ENCODE measurements at regions of chr15 and their contacts with region 1.

Region 1: GRCh38 chr15:92521624-92522008 is 127.9 kb downstream of the ST8SIA2 start:
- DNase-seq: peak; percentile 80 to 81
- ATAC-seq: peak; percentile 98 to 99
- H3K4me3 ChIP-seq: no peak overlapping the region
- H3K27ac ChIP-seq: no peak overlapping the region
- H3K4me1 ChIP-seq: no peaks in the 10 kb centered on the region
- CTCF ChIP-seq: peak; percentile 70
- EP300 ChIP-seq: no peak
- POLR2A ChIP-seq: no peak
- RAD21 ChIP-seq: peak; percentile 86 to 88

Region 2: GRCh38 chr15:92473756-92474155 is 47.9 kb before region 1 on chr15:
- CTCF ChIA-PET with region 1: no interaction called
- POLR2A ChIA-PET with region 1: no interaction called
- DNase-seq: no peak
- ATAC-seq: no peak
- H3K4me3 ChIP-seq: no peak overlapping the region
- H3K27ac ChIP-seq: no peak overlapping the region
- H3K4me1 ChIP-seq: no peaks in the 10 kb centered on the region
- CTCF ChIP-seq: no peak
- EP300 ChIP-seq: no peak
- POLR2A ChIP-seq: no peak
- RAD21 ChIP-seq: no peak

Region 3: DNA sequence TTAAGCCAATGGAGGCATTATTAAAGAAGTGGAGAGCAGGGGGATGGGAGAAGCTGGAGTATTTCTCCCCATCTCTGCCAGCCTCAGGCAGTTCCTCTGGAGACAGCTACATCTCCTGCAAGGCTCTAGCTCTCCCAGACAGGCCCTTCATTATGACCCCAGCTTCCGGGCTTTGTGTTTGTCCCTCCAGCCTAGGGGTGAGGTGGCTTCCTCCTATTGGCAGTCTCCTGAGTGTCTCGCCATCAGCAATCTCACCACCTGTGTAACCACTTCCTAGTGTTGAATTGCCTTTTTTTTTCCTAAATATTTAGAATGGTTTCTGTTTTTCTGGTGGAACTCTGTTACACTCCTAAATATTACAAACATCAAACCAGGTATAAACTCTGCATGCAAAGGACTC is 11.7 kb after region 1 on chr15:
- CTCF ChIA-PET with region 1: interaction called, 18 read pairs
- POLR2A ChIA-PET with region 1: no interaction called
- DNase-seq: no peak
- ATAC-seq: no peak
- H3K4me3 ChIP-seq: no peak overlapping the region
- H3K27ac ChIP-seq: no peak overlapping the region
- H3K4me1 ChIP-seq: no peaks in the 10 kb centered on the region
- CTCF ChIP-seq: no peak
- EP300 ChIP-seq: no peak
- POLR2A ChIP-seq: no peak
- RAD21 ChIP-seq: no peak

Region 4: GRCh38 chr15:92683232-92683834 is 161.7 kb after region 1 on chr15:
- CTCF ChIA-PET with region 1: interaction called, 16 read pairs
- POLR2A ChIA-PET with region 1: no interaction called
- DNase-seq: peak in 1 of 2 experiments; percentile 68
- ATAC-seq: peak; percentile 70 to 90; a peak in 5 of 6 replicates
- H3K4me3 ChIP-seq: no peak overlapping the region
- H3K27ac ChIP-seq: no peak overlapping the region
- H3K4me1 ChIP-seq: peaks cover 9% of the 10 kb centered on the region; the same call in 2 of the 3 replicates
- CTCF ChIP-seq: peak; percentile 56
- EP300 ChIP-seq: no peak
- POLR2A ChIP-seq: no peak
- RAD21 ChIP-seq: peak; percentile 82 to 88

Region 5: GRCh38 chr15:92709110-92709790 is 187.6 kb after region 1 on chr15:
- CTCF ChIA-PET with region 1: interaction called, 102 read pairs
- POLR2A ChIA-PET with region 1: interaction called, 9 read pairs
- DNase-seq: no peak
- ATAC-seq: no peak
- H3K4me3 ChIP-seq: no peak overlapping the region
- H3K27ac ChIP-seq: no peak overlapping the region
- H3K4me1 ChIP-seq: no peaks in the 10 kb centered on the region
- CTCF ChIP-seq: no peak
- EP300 ChIP-seq: no peak
- POLR2A ChIP-seq: no peak
- RAD21 ChIP-seq: no peak

Measured in A549 (cell line).